Posterior vena cava (tissue), 2 donors: ENCODE measurements at regions of chrX and their contacts with region 1.

Region 1: DNA sequence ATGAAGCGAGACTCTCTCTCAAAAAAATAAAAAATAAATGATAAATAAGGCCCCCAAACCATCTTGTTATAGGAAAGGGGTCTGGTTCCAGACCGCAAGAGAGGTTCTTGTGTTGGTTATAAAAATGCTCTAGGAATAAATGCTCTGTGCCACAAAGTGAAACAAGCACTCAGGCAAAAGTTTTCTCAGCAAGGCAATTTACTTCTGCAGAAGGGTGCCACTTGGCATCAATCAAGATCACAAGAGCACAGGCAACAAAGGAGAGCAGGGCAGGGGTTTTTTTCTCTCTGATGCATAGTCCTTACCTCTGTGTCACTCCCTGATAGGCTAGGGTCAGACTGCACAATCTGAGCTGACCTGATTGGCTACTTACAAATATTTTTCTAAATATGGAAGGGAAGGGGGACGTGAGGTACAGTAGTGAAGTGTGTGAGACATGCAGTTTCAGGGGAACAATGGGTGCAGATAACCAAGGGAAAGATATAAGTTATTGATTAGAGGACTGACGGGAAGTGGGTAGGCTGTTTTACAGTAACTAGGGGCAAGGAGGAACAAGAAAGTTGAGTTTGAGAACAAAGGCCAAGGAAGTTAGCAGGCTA is 29.8 kb upstream of the FUNDC1 start:
- DNase-seq: no peak

Region 2: DNA sequence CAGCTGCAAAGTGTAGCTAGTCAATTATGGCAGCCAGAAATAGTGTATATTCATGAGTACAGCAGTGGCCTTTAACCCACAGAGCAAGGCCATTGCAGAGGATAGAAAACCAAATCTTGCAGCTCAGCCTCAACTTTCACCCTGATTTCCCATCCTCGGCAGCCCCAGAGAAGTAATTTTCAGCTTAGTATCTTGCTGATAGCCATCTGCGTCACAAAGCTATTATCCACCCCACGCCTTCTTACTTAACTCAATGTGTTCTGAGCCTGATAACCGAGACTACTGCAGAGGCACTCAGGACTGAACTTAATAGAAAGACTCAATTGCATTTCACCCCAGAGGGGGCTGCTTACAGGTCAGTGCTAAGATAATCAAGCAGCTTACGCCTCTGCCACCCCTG is 1090.9 kb before region 1 on chrX:
- intact Hi-C with region 1: no loop called
- DNase-seq: no peak

Region 3: GRCh38 chrX:44621078-44621477 is 48.6 kb after region 1 on chrX:
- intact Hi-C with region 1: loop called in 1 of 2 experiments (anchors 2 kb)
- DNase-seq: no peak

Region 4: GRCh38 chrX:45050558-45050957 is 478.1 kb after region 1 on chrX:
- intact Hi-C with region 1: no loop called
- DNase-seq: no peak